Esophagus squamous epithelium (tissue), 5 donors: ENCODE measurements at regions of chr20 and their contacts with region 1.

Region 1: DNA sequence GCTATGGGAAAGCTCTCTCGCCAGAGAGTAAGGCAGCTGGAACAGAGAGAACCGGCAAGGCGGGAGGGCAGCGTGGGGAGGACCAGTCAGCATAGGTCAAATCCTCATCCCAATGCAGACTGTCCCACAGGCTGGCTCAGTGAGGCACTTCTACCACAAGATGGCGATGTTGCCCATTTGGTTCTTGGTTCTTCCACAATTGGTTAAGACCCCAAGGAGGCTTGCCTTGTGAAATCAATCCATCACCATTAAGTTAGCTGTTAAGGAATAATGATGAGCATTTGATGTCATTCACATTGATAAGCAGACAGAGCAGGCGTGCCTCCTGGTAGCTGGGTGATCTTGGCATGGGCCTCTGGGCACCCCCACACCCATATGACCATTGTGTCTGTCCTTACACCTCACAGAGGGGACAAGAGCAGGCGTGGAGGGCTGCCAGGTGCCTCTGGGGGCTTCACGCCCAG is 2.4 kb downstream of the CSTL1 start:
- DNase-seq: no peak
- H3K4me3 ChIP-seq: no peak overlapping the region
- H3K27ac ChIP-seq: no peak overlapping the region
- H3K4me1 ChIP-seq: peaks cover 0 to 12% (median 0%) of the 10 kb centered on the region in 3 donors
- H3K27me3 ChIP-seq: no peaks in the 10 kb centered on the region
- CTCF ChIP-seq: peak; percentile 31 to 86 (median 77)
- POLR2A ChIP-seq: no peak

Region 2: GRCh38 chr20:23399568-23400241 is 42.2 kb before region 1 on chr20:
- intact Hi-C with region 1: no loop called
- DNase-seq: no peak
- H3K4me3 ChIP-seq: no peak overlapping the region
- H3K27ac ChIP-seq: no peak overlapping the region
- H3K4me1 ChIP-seq: peaks cover 6 to 39% (median 14%) of the 10 kb centered on the region in 3 donors
- H3K27me3 ChIP-seq: no peaks in the 10 kb centered on the region
- CTCF ChIP-seq: no peak
- POLR2A ChIP-seq: no peak

Region 3: DNA sequence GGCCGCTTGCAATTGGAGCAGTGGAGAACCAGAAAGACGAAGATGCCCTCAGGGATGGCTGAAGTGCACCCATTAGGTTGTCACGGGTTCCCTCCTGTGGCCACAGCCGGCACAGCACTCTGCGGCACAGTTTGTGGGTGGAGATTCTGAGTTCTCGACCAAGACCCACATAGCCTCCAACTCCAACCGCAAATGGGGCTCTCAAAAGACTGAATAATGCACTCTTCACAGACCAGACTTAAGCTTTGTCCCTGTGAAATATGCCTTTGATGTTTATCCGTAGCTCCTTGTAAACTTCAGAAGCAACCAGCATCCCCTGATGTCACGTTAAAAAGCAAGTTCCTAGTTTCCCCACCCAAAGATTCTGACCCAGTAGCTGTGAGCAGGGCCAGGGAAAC is 164.8 kb after region 1 on chr20:
- intact Hi-C with region 1: loop called (anchors 5 kb)
- DNase-seq: no peak
- H3K4me3 ChIP-seq: no peak overlapping the region
- H3K27ac ChIP-seq: no peak overlapping the region
- H3K4me1 ChIP-seq: peaks cover 0 to 14% (median 3%) of the 10 kb centered on the region in 3 donors
- H3K27me3 ChIP-seq: no peaks in the 10 kb centered on the region
- CTCF ChIP-seq: peak; percentile 61 to 95 (median 90)
- POLR2A ChIP-seq: no peak